ENCODE measurements at regions of chr5 and their contacts with region 1.

Region 1: GRCh38 chr5:127313847-127314473 is 23.4 kb downstream of the MEGF10 start:
- DNase-seq: peak; percentile 76
- H3K4me3 Mint-ChIP-seq: no peak overlapping the region
- H3K27ac Mint-ChIP-seq: no peak overlapping the region
- H3K4me1 Mint-ChIP-seq: peaks cover 2% of the 10 kb centered on the region
- H3K27me3 Mint-ChIP-seq: peaks cover 5% of the 10 kb centered on the region

Region 2: DNA sequence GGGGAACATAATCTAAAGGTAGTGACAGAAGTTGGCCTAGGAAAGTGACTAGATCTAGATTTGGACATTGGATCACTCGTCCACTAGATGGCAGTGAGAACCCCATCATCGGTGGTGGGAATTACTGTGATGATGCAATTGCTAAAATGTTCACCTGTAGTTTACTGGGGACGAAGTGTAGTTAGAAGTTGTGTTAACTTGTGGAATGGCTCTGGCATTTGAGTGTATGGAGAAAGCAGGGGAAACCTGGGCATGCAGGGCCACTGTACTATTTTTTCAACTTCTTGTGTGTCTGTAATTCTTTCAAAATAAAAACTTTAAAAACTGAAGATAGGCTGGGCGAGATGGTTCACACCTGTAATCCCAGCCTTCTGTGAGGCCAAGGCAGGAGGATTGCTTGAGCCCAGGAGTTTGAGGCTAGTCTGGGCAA is 637.8 kb before region 1 on chr5:
- CTCF ChIA-PET with region 1: no interaction called
- POLR2A ChIA-PET with region 1: no interaction called
- intact Hi-C with region 1: loop called (anchors 1 kb)
- DNase-seq: peak; percentile 78
- H3K4me3 Mint-ChIP-seq: no peak overlapping the region
- H3K27ac Mint-ChIP-seq: peak overlapping the region; percentile 20
- H3K4me1 Mint-ChIP-seq: peaks cover 3% of the 10 kb centered on the region
- H3K27me3 Mint-ChIP-seq: no peaks in the 10 kb centered on the region

Region 3: DNA sequence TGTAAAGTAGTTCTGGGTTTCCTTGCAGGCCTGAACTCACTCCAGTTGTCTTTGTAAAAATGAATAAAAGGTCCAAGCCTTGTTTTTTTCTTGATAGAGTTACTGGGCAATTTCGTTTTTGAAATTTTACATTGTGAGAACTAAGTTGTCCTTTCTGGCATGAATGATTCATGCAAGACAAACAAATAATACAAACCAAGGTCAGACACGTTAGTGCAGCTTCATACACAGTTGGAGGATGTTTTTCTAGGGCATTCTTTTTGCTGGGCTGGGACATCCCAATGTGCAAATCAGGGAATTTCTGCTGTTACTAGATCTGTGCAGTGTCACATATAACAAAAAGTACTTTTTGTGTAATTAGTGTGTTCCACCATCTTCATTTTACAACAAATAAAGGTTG is 72.6 kb after region 1 on chr5:
- CTCF ChIA-PET with region 1: no interaction called
- POLR2A ChIA-PET with region 1: no interaction called
- intact Hi-C with region 1: no loop called
- DNase-seq: no peak
- H3K4me3 Mint-ChIP-seq: no peak overlapping the region
- H3K27ac Mint-ChIP-seq: no peak overlapping the region
- H3K4me1 Mint-ChIP-seq: no peaks in the 10 kb centered on the region
- H3K27me3 Mint-ChIP-seq: no peaks in the 10 kb centered on the region